ENCODE measurements at regions of chr11 and their contacts with region 1.

Region 1: DNA sequence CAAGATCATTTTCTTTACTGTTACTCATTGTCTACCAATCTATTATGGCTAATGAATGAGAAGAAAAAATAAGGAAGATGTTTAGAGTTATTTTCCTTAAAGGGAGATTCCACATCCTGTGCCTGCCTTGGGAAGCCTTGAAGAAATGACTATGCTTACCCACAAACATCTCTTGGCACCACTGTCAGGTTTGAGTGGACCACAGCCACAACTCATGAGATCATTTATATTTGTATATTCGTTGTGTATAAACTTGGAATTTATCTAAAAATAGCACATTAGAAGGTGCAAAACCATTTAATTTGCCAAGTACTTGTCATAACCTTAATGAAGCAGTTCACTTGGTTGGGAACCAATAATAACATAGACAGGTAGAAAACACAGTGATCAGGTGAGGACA is 740.8 kb downstream of the DLG2 start:
- DNase-seq: no peak
- H3K4me3 ChIP-seq: no peak overlapping the region
- H3K4me3 Mint-ChIP-seq: no peak overlapping the region
- H3K27ac Mint-ChIP-seq: no peak overlapping the region
- H3K4me1 ChIP-seq: peaks cover 15% of the 10 kb centered on the region; the same call in 1 of the 2 replicates
- H3K4me1 Mint-ChIP-seq: peaks cover 8% of the 10 kb centered on the region
- H3K27me3 ChIP-seq: no peaks in the 10 kb centered on the region
- H3K27me3 Mint-ChIP-seq: no peaks in the 10 kb centered on the region
- CTCF ChIP-seq: no peak

Region 2: GRCh38 chr11:84833488-84834088 is 52.8 kb before region 1 on chr11:
- CTCF ChIA-PET with region 1: no interaction called
- POLR2A ChIA-PET with region 1: no interaction called
- intact Hi-C with region 1: loop called (anchors 2 kb)
- DNase-seq: no peak
- H3K4me3 ChIP-seq: no peak overlapping the region
- H3K4me3 Mint-ChIP-seq: no peak overlapping the region
- H3K27ac Mint-ChIP-seq: no peak overlapping the region
- H3K4me1 ChIP-seq: peaks cover 17% of the 10 kb centered on the region; the same call in 1 of the 2 replicates
- H3K4me1 Mint-ChIP-seq: peaks cover 21% of the 10 kb centered on the region
- H3K27me3 ChIP-seq: no peaks in the 10 kb centered on the region
- H3K27me3 Mint-ChIP-seq: no peaks in the 10 kb centered on the region
- CTCF ChIP-seq: no peak

Region 3: DNA sequence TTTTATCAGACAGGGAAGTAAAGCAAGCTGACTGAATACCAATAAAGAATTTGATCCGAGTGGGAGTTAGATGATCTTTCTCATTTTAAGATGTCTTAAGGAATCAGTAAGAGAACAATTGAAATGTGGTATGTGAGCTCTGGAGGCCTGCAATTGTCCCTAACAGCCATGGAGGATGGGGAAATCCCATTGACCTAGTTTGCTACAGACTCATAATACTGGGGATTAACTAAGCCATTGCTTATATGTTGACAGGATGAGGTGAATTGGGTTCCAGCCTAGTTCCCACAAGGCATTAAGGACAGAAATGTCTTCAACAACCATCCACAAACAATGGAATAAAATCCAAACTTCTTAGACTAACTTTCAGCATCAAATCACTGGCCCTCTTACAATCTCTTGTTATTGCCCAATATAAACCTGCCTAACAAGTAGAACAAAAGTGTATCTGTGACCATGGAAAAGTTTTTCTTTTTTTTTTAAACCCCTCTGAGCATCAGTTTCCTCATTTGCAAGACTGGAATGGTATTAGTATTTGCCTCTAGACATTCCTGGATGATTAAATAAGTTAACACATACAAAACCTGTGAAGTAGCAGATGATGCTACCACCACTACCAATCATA is 32.4 kb before region 1 on chr11:
- CTCF ChIA-PET with region 1: no interaction called
- POLR2A ChIA-PET with region 1: no interaction called
- intact Hi-C with region 1: loop called (anchors 2 kb)
- DNase-seq: no peak
- H3K4me3 ChIP-seq: no peak overlapping the region
- H3K4me3 Mint-ChIP-seq: no peak overlapping the region
- H3K27ac Mint-ChIP-seq: no peak overlapping the region
- H3K4me1 ChIP-seq: peaks cover 15% of the 10 kb centered on the region
- H3K4me1 Mint-ChIP-seq: peaks cover 6% of the 10 kb centered on the region
- H3K27me3 ChIP-seq: no peaks in the 10 kb centered on the region
- H3K27me3 Mint-ChIP-seq: no peaks in the 10 kb centered on the region
- CTCF ChIP-seq: no peak

Region 4: DNA sequence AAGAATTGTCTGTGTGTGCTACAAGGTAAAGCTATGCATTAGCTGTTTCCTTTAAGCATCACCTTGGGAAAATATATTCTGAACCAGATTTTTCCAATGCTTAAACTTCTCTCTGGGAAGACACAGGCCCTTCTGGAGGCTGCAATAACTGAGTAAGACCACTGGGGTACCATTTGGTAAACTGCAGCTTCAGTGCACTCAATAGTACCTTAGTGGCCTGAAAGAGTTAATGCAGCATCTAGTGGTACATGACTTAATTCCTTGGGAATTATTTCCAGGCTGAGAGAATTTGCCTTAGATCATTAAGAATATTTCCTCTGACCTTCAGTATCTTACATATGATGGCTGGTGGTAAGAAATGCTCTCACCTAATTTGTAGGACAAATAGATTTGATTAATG is 13.4 kb after region 1 on chr11:
- CTCF ChIA-PET with region 1: no interaction called
- POLR2A ChIA-PET with region 1: no interaction called
- intact Hi-C with region 1: no loop called
- DNase-seq: no peak
- H3K4me3 ChIP-seq: no peak overlapping the region
- H3K4me3 Mint-ChIP-seq: no peak overlapping the region
- H3K27ac Mint-ChIP-seq: no peak overlapping the region
- H3K4me1 ChIP-seq: no peaks in the 10 kb centered on the region
- H3K4me1 Mint-ChIP-seq: no peaks in the 10 kb centered on the region
- H3K27me3 ChIP-seq: no peaks in the 10 kb centered on the region
- H3K27me3 Mint-ChIP-seq: peaks cover 2% of the 10 kb centered on the region
- CTCF ChIP-seq: peak; percentile 65 to 66

Region 5: DNA sequence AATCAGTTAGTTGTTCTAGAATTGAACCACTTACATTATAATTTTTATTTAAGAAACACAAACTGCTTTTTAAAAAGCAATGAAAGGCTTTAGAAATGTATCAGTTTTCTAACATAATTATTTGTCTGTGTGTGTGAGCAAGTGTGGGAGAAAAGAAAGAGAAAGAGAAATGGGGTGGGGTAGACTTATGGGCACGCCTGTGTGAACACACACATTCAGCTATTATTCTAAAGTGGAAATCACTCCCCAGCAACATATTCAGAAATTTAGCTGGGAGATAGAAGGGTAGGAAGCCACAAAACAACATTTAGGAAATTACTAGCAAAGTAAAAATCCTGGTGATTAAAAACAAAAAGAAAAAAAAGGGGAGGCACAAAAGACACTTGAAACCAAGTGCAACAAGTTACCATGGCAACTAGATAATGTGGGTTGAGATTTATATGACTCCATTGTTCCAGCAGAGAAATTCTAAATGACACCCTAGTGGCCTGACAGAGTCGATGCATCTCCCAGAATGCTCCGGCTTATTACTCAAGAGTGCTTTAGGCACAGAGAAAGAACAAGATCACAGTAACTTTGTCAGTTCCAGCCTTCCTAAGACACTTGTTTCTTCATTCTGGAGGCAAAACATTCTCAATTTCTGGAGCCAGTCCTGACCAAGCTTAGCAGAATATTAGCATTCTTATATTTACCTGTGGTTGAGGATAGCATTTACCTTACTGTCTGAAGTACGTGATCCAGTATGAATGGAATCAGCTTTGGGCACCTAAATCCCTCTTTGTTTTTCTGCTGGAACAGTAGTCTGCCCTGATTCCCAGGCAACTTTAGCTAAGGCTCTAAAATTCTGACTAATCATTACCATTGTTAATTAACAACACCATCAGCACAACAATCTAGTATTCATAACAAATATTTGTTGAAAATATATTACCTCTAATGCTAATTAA is 296.4 kb after region 1 on chr11:
- CTCF ChIA-PET with region 1: no interaction called
- POLR2A ChIA-PET with region 1: no interaction called
- intact Hi-C with region 1: loop called (anchors 10 kb)
- DNase-seq: peak; percentile 61 to 70
- H3K4me3 ChIP-seq: no peak overlapping the region
- H3K4me3 Mint-ChIP-seq: no peak overlapping the region
- H3K27ac Mint-ChIP-seq: no peak overlapping the region
- H3K4me1 ChIP-seq: peaks cover 9% of the 10 kb centered on the region
- H3K4me1 Mint-ChIP-seq: peaks cover 16% of the 10 kb centered on the region
- H3K27me3 ChIP-seq: no peaks in the 10 kb centered on the region
- H3K27me3 Mint-ChIP-seq: no peaks in the 10 kb centered on the region
- CTCF ChIP-seq: peak; percentile 72 to 80

Measured in Caco-2 (cell line).